Panc1 (cell line): ENCODE measurements at regions of chr22 and their contacts with region 1.

Region 1: DNA sequence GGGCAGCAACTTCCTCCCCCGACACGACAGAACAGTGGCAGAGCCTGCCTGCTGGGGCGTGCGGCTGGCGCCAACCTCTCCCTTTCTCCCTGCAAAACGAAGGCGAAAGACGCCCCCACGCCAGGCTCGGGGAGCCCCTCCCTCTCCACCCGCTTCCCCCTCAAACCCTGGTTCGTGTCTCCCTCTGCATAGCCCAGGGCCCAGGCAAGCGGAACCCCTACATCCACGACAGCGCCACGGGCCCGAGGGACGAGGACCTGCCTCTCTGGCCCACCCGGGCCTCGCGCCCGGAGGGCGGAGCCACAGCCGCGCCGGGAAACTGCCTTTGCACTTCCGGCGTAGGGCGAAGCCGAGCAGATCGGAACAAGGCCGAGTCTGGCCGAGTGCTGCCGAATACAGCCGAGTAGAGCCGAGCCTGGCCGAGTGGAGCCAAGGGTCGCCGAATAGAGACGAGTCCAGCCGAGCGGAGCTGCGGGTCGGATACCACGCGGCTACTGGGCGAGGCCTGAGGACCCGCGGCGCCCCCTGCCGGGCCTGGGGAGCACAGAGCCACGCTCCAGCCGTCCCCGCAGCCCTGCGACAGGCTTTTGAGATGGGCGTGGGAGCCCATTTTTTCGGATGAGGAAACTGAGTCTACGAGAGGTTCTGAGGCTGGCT is 11.2 kb upstream of the C1QTNF6 start:
- DNase-seq: peak; percentile 93
- ATAC-seq: peak; percentile 90
- H3K4me3 ChIP-seq: peak overlapping the region; percentile 51 to 66
- H3K27ac ChIP-seq: peak overlapping the region; percentile 94
- H3K4me1 ChIP-seq: peaks cover 43% of the 10 kb centered on the region
- H3K27me3 ChIP-seq: no peaks in the 10 kb centered on the region
- CTCF ChIP-seq: peak; percentile 94

Region 2: DNA sequence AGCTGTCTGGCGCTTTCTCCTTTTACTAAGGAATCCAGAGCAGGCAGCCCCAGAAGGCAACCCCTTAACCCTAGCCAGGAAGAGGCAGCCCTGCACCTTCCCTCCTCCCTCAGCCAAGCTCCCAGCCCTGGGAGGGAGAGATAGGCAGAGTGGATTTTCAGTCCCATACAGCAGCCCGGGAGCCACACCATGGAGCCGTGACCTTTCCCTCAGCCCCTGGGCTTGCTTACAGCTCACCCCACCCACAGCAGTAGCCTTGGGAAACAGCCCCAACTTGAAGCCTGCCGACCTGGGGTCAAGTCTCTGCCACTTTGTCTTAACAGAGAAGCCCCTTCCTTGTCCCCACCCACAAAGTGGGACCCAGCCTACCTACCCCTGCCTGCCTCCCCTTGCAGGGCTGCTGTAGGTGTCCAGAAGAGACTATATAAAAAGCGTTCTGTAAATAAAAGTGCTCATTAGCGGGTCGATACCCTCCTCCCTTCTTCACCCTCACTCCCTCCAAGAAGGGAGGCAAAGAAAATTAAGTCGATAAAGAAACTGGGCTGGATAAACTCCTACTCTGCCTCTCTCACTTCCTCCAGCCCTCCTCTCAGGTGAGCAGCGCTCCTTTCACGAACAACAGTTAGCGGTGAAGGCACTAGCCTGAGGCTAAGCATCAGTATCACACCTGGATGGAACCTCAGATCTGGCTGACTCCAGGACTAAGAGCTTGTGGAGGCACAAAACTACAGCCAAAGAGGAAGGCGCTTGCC is 184.2 kb before region 1 on chr22:
- CTCF ChIA-PET with region 1: no interaction called
- POLR2A ChIA-PET with region 1: interaction called, 15 read pairs
- in situ Hi-C with region 1: no loop called
- intact Hi-C with region 1: no loop called
- DNase-seq: no peak
- ATAC-seq: no peak
- H3K4me3 ChIP-seq: no peak overlapping the region
- H3K27ac ChIP-seq: no peak overlapping the region
- H3K4me1 ChIP-seq: peaks cover 4% of the 10 kb centered on the region
- H3K27me3 ChIP-seq: no peaks in the 10 kb centered on the region
- CTCF ChIP-seq: no peak

Region 3: GRCh38 chr22:37166675-37167066 is 32.6 kb before region 1 on chr22:
- CTCF ChIA-PET with region 1: interaction called, 7 read pairs
- POLR2A ChIA-PET with region 1: no interaction called
- in situ Hi-C with region 1: no loop called
- intact Hi-C with region 1: loop called (anchors 2 kb)
- DNase-seq: peak; percentile 38
- ATAC-seq: peak; percentile 95
- H3K4me3 ChIP-seq: no peak overlapping the region
- H3K27ac ChIP-seq: peak overlapping the region; percentile 79
- H3K4me1 ChIP-seq: peaks cover 16% of the 10 kb centered on the region
- H3K27me3 ChIP-seq: no peaks in the 10 kb centered on the region
- CTCF ChIP-seq: peak; percentile 89